GM12878 (cell line): ENCODE measurements at regions of chr13 and their contacts with region 1.

Region 1: GRCh38 chr13:75788481-75788981 is 152.4 kb downstream of the LMO7 start:
- DNase-seq: no peak
- ATAC-seq: no peak
- H3K4me3 ChIP-seq: no peak overlapping the region
- H3K27ac ChIP-seq: no peak overlapping the region
- H3K4me1 ChIP-seq: no peaks in the 10 kb centered on the region
- H3K27me3 ChIP-seq: no peaks in the 10 kb centered on the region
- CTCF ChIP-seq: no peak
- EP300 ChIP-seq: no peak
- POLR2A ChIP-seq: no peak
- RAD21 ChIP-seq: no peak

Region 2: GRCh38 chr13:75850916-75851315 is 62.4 kb after region 1 on chr13:
- CTCF ChIA-PET with region 1: no interaction called
- POLR2A ChIA-PET with region 1: interaction called, 11 read pairs
- RAD21 ChIA-PET with region 1: no interaction called
- SMC1A ChIA-PET with region 1: no interaction called
- in situ Hi-C with region 1: no loop called
- intact Hi-C with region 1: no loop called
- DNase-seq: no peak
- ATAC-seq: no peak
- H3K4me3 ChIP-seq: no peak overlapping the region
- H3K27ac ChIP-seq: no peak overlapping the region
- H3K4me1 ChIP-seq: no peaks in the 10 kb centered on the region; the same call in 1 of the 2 replicates
- H3K27me3 ChIP-seq: no peaks in the 10 kb centered on the region
- CTCF ChIP-seq: no peak
- EP300 ChIP-seq: no peak
- POLR2A ChIP-seq: no peak
- RAD21 ChIP-seq: no peak

Region 3: GRCh38 chr13:75881109-75881775 is 92.7 kb after region 1 on chr13:
- CTCF ChIA-PET with region 1: no interaction called
- POLR2A ChIA-PET with region 1: no interaction called
- RAD21 ChIA-PET with region 1: no interaction called
- SMC1A ChIA-PET with region 1: no interaction called
- in situ Hi-C with region 1: no loop called
- intact Hi-C with region 1: no loop called
- DNase-seq: no peak
- ATAC-seq: peak; percentile 20
- H3K4me3 ChIP-seq: no peak overlapping the region
- H3K27ac ChIP-seq: no peak overlapping the region
- H3K4me1 ChIP-seq: no peaks in the 10 kb centered on the region
- H3K27me3 ChIP-seq: no peaks in the 10 kb centered on the region; a peak in 1 of 4 replicates
- CTCF ChIP-seq: no peak
- EP300 ChIP-seq: no peak
- POLR2A ChIP-seq: no peak
- RAD21 ChIP-seq: no peak